ENCODE measurements at regions of chr2 and their contacts with region 1.

Region 1: DNA sequence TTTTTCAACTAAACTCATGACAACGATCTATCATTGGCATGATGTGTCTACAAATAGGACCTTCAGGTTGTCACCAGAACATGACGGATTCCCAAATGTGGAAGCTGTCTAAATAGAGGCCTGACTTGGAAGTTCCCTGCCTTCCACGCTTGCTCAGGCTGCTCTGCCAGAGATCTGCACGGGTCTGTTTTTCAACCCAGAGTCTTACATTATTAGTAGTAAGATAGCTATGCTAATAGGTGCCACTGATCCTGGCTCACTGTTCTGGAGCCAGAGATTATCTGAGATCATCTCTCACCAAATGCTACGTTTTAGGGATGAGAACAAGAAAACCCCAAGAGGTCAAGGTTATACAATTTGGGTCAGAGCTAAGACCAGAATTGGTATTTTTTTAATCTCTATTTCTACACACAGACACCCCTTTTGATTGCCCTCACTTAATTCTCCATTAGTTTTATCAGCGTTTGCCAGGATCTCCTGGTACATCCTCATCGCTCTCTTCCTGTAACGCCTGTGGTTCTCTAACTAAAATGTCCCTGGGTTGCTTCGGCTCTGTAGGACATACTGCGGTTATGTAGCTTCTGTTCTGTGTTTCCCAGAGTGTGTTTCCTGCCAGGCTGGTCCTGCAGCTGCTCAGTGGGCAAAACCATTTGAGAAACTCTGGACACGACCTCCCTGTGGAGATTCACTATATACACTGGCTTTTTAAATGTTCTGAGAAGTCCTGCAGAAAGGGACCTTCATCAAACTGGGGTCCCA is 5.7 kb downstream of the CDC42EP3 start:
- DNase-seq: no peak
- H3K4me3 ChIP-seq: no peak overlapping the region
- H3K27ac ChIP-seq: peak overlapping the region; percentile 44 to 61 (median 50)
- H3K4me1 ChIP-seq: peaks cover 21 to 84% (median 40%) of the 10 kb centered on the region in 4 donors
- H3K27me3 ChIP-seq: no peaks in the 10 kb centered on the region
- CTCF ChIP-seq: no peak
- EP300 ChIP-seq: no peak
- POLR2A ChIP-seq: no peak

Region 2: GRCh38 chr2:37635504-37636380 is 30.0 kb before region 1 on chr2:
- in situ Hi-C with region 1: no loop called
- intact Hi-C with region 1: no loop called
- DNase-seq: peak; percentile 28
- H3K4me3 ChIP-seq: no peak overlapping the region
- H3K27ac ChIP-seq: peak overlapping the region in 3 of 4 donors; percentile 11 to 34 (median 28)
- H3K4me1 ChIP-seq: peaks cover 0 to 3% (median 0%) of the 10 kb centered on the region in 4 donors
- H3K27me3 ChIP-seq: no peaks in the 10 kb centered on the region
- CTCF ChIP-seq: no peak
- EP300 ChIP-seq: no peak
- POLR2A ChIP-seq: no peak

Region 3: GRCh38 chr2:37832590-37833197 is 166.9 kb after region 1 on chr2:
- in situ Hi-C with region 1: no loop called
- intact Hi-C with region 1: loop called (anchors 5 kb)
- DNase-seq: peak; percentile 92
- H3K4me3 ChIP-seq: no peak overlapping the region
- H3K27ac ChIP-seq: peak overlapping the region in 2 of 4 donors; percentile 8 to 52
- H3K4me1 ChIP-seq: peaks cover 0 to 11% (median 2%) of the 10 kb centered on the region in 4 donors
- H3K27me3 ChIP-seq: no peaks in the 10 kb centered on the region
- CTCF ChIP-seq: peak; percentile 71 to 94 (median 80)
- EP300 ChIP-seq: no peak
- POLR2A ChIP-seq: no peak

Region 4: GRCh38 chr2:37982147-37982582 is 316.4 kb after region 1 on chr2:
- in situ Hi-C with region 1: no loop called
- intact Hi-C with region 1: no loop called
- DNase-seq: peak; percentile 75
- H3K4me3 ChIP-seq: no peak overlapping the region
- H3K27ac ChIP-seq: no peak overlapping the region
- H3K4me1 ChIP-seq: no peaks in the 10 kb centered on the region
- H3K27me3 ChIP-seq: no peaks in the 10 kb centered on the region
- CTCF ChIP-seq: peak; percentile 72 to 87 (median 81)
- EP300 ChIP-seq: no peak
- POLR2A ChIP-seq: no peak

Measured in transverse colon (tissue), 4 donors.